Activated CD4-positive, alpha-beta T cell treated with anti-CD3 and anti-CD28 coated beads, Interleukin-2, amount 10 ng/mL, durations not matched to agents 24 days and 14 days (primary cell): ENCODE measurements at regions of chr20 and their contacts with region 1.

Region 1: GRCh38 chr20:45890985-45891983 is at the starts of genes CTSA and NEURL2:
- DNase-seq: peak; percentile 96
- H3K4me3 Mint-ChIP-seq: peak within 1 kb of the TSS; percentile 95
- H3K27ac Mint-ChIP-seq: peak within 1 kb of the TSS; percentile 92
- H3K4me1 Mint-ChIP-seq: peaks cover 17% of the 10 kb centered on the region
- H3K27me3 Mint-ChIP-seq: no peaks in the 10 kb centered on the region
- total RNA-seq, gene CTSA: 48.7 and 50.8 TPM in 2 replicates
- total RNA-seq, gene NEURL2: 2.0 and 2.4 TPM in 2 replicates

Region 2: GRCh38 chr20:44714696-44715482 is 1176.4 kb before region 1 on chr20 and contains the start of gene CCN5:
- intact Hi-C with region 1: no loop called
- DNase-seq: no peak
- H3K4me3 Mint-ChIP-seq: no peak within 1 kb of the TSS
- H3K27ac Mint-ChIP-seq: no peak within 1 kb of the TSS
- H3K4me1 Mint-ChIP-seq: no peaks in the 10 kb centered on the region
- H3K27me3 Mint-ChIP-seq: no peaks in the 10 kb centered on the region
- total RNA-seq, gene CCN5: not detected in 2 replicates

Region 3: DNA sequence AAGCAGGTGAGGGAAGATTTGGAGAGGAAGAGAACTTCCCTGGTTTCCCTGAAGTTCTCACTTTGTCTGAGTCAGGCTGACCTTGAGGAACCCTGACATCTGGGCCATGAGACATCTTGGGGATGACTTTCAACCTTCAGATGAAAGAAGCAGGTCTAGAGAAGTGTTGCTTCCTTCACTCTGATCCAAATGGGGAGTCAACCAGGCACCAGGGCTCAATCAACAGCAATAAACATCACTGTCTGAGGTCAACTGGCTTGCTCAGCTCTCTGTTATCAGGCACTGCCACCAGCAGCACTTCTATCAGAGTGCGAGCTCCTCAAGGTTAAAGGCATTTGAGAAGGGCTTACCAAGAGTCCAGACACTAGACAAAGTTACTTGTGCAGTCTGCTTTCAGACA is 40.4 kb before region 1 on chr20:
- intact Hi-C with region 1: no loop called
- DNase-seq: no peak
- H3K4me3 Mint-ChIP-seq: no peak overlapping the region
- H3K27ac Mint-ChIP-seq: no peak overlapping the region
- H3K4me1 Mint-ChIP-seq: peaks cover 9% of the 10 kb centered on the region
- H3K27me3 Mint-ChIP-seq: no peaks in the 10 kb centered on the region

Region 4: DNA sequence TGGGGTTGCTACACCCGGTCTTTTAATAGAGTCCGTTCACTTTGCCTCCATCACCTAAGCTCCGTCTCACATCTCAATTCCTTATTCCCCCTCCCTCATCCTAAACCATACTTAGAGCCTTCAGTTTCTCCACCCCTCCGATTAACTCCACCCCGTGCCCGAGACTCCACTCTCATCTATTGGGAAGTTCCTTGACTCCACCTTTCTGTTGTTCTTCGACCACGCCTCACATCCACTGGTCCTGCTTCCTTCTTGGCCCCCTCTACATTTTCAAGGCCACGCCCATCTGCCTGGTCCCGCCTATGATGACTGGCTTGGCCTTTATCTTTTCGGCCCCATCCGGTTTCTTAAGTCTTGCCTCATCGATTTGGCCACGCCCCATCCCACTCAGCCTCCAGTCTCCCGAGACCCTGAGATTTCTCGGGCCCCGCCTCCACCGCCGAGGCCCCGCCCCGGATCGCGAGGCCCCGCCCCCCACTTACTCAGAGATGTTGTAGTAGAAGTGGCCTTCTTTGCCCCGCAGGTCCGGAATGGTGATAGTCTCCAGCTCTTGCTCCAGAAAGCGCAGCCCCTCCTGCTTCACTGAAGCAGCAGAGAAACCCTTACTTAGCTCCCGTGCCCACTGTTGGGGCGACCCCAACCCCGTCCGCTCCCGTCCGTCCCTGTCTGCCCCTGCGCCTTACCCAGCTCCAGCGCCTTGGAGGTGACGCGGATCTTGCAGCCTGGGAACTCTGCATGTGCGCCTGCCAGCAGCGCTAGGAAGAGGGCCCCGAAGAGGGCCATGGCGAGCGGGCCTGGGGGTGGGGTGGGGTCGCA is 19.6 kb after region 1 on chr20:
- intact Hi-C with region 1: loop called (anchors 1 kb)
- DNase-seq: peak; percentile 96
- H3K4me3 Mint-ChIP-seq: peak overlapping the region; percentile 84
- H3K27ac Mint-ChIP-seq: peak overlapping the region; percentile 86
- H3K4me1 Mint-ChIP-seq: peaks cover 11% of the 10 kb centered on the region
- H3K27me3 Mint-ChIP-seq: peaks cover 5% of the 10 kb centered on the region